Activated CD4-positive, alpha-beta T cell treated with anti-CD3 and anti-CD28 coated beads for 36 hours (primary cell): ENCODE measurements at regions of chr14 and their contacts with region 1.

Region 1: DNA sequence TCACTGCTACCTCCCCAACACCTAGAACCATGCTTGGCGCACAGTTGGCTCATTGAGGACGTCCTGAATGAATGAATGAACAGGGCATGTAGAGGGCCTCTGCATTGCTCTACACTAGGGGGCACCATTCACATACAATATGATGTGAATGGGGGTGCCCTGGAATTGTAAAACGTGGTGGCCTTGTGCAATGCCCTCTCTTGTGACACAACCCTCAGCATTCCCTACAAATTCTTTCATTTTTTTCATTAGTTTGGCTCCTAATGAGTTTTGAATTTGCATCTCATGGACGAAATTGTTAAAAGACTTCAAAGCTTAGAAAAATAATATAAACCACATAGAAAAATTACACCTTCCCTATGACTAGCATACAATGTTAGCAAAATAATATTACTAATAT is 2.3 kb upstream of the DIO2 start:
- DNase-seq: peak; percentile 30
- ATAC-seq: no peak
- H3K4me3 Mint-ChIP-seq: no peak overlapping the region
- H3K27ac Mint-ChIP-seq: no peak overlapping the region
- H3K4me1 Mint-ChIP-seq: no peaks in the 10 kb centered on the region
- H3K27me3 Mint-ChIP-seq: peaks cover 1% of the 10 kb centered on the region

Region 2: GRCh38 chr14:79204591-79204990 is 1009.0 kb before region 1 on chr14:
- CTCF ChIA-PET with region 1: no interaction called
- POLR2A ChIA-PET with region 1: no interaction called
- intact Hi-C with region 1: no loop called
- DNase-seq: no peak
- ATAC-seq: no peak
- H3K4me3 Mint-ChIP-seq: no peak overlapping the region
- H3K27ac Mint-ChIP-seq: no peak overlapping the region
- H3K4me1 Mint-ChIP-seq: no peaks in the 10 kb centered on the region
- H3K27me3 Mint-ChIP-seq: no peaks in the 10 kb centered on the region

Region 3: GRCh38 chr14:80231702-80232101 is 18.1 kb after region 1 on chr14:
- CTCF ChIA-PET with region 1: no interaction called
- POLR2A ChIA-PET with region 1: no interaction called
- intact Hi-C with region 1: no loop called
- DNase-seq: no peak
- ATAC-seq: no peak
- H3K4me3 Mint-ChIP-seq: no peak overlapping the region
- H3K27ac Mint-ChIP-seq: no peak overlapping the region
- H3K4me1 Mint-ChIP-seq: no peaks in the 10 kb centered on the region
- H3K27me3 Mint-ChIP-seq: no peaks in the 10 kb centered on the region

Region 4: DNA sequence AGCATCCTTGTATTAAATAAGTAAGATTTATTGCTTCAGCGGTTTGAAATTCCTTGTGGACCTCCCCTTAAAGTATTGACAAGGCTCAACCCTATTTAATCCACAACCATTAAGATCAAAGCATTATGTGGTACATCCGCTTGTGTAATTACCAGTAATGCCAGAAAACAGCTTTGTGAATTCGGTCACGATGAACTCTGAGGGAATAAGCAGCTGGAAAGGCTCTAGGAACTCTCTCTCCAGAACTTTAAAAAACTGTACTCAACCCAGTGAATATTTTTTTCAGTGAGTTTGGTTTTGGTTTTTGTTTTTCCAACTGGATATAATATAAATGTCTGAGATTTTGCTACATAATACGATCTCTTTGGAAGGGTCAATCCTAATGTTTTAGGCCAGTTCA is 47.0 kb after region 1 on chr14:
- CTCF ChIA-PET with region 1: no interaction called
- POLR2A ChIA-PET with region 1: interaction called, 10 read pairs
- intact Hi-C with region 1: no loop called
- DNase-seq: no peak
- ATAC-seq: no peak
- H3K4me3 Mint-ChIP-seq: no peak overlapping the region
- H3K27ac Mint-ChIP-seq: no peak overlapping the region
- H3K4me1 Mint-ChIP-seq: no peaks in the 10 kb centered on the region
- H3K27me3 Mint-ChIP-seq: no peaks in the 10 kb centered on the region